ENCODE measurements at regions of chr4 and their contacts with region 1.

Region 1: DNA sequence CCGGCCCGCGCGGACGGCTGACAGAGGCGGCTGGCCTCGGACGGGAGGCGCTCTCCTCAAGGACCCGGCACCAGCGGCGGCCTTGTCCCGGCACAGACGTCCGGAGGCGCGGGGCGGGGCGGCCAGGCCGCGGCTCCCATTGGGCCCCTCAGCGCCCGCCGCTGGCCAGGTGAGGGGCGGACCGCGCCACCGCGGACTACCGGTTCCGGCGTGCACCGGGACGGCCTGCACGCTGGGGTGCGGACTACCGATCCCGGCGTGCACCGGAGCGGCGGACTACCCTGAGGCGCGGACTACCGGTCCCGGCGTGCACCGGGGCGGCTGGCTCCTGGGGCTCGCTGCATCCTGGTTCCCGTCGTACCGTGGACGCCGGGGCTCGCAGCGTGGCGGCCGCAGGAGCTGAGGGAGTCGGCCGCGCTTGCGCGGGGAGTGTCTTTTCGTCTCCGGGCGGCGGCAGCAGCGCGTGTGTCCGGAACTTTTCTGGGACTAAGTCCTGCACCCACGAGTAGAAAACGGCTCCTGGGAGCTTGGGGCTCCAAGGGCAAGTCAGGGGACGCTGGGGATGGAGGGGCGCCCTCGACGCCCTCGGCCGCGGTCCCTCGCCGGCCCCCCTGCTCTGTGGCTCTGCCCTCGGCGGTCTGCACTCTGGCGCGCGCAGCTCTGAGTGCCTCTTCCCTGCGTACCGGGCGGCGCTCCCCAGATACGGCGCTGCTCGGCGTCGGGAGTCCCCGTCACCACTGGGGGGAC is at the start of gene LETM1:
- DNase-seq: peak; percentile 95
- H3K4me3 Mint-ChIP-seq: peak within 1 kb of the TSS; percentile 87
- H3K27ac Mint-ChIP-seq: peak within 1 kb of the TSS; percentile 68
- H3K4me1 Mint-ChIP-seq: peaks cover 34% of the 10 kb centered on the region
- H3K27me3 Mint-ChIP-seq: no peaks in the 10 kb centered on the region
- total RNA-seq, gene LETM1: 93.9 and 101 TPM in 2 replicates

Region 2: DNA sequence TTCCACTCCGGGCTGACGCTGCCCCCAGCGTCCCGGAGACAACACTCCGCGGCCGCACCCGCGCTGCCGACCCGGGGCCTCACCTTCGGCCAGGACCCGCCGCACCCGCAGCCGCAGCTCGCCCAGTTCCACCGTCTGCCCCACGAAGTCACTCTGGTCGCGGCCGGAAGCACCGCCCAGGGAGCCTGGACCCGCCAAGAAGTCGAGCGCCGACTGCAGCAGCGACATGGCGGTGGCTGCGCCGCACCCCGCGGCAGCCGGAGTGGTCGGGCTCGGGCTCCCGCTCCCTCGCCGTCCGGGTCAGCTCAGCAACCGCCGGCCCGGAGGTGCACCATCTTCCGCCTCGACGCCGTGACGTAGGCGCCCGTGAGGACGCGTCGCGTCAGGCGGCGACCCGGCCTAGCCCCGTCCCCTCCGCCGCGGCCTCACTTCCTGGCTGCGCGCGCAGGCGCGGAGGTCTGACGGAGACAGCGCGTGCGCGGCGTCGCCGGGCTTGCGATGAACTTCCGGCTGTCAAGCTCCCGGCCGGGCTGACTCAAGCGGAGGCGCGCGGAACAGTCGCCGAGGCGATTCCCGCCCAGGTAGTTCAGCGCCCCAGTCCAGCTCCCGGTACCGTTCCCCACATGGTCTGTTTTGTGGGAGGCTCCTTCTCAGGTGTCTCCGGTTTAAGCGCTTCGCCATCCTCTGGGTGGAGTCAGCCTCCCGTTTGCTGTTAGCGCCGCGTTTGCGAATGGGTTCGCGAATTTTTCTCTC is 924.1 kb before region 1 on chr4 and contains the starts of genes GAK and TMEM175:
- intact Hi-C with region 1: loop called (anchors 5 kb)
- DNase-seq: peak; percentile 99
- H3K4me3 Mint-ChIP-seq: peak within 1 kb of the TSS; percentile 97
- H3K27ac Mint-ChIP-seq: peak within 1 kb of the TSS; percentile 90
- H3K4me1 Mint-ChIP-seq: peaks cover 34% of the 10 kb centered on the region
- H3K27me3 Mint-ChIP-seq: no peaks in the 10 kb centered on the region
- total RNA-seq, gene GAK: 146 and 149 TPM in 2 replicates
- total RNA-seq, gene TMEM175: 15.4 and 16.2 TPM in 2 replicates

Region 3: DNA sequence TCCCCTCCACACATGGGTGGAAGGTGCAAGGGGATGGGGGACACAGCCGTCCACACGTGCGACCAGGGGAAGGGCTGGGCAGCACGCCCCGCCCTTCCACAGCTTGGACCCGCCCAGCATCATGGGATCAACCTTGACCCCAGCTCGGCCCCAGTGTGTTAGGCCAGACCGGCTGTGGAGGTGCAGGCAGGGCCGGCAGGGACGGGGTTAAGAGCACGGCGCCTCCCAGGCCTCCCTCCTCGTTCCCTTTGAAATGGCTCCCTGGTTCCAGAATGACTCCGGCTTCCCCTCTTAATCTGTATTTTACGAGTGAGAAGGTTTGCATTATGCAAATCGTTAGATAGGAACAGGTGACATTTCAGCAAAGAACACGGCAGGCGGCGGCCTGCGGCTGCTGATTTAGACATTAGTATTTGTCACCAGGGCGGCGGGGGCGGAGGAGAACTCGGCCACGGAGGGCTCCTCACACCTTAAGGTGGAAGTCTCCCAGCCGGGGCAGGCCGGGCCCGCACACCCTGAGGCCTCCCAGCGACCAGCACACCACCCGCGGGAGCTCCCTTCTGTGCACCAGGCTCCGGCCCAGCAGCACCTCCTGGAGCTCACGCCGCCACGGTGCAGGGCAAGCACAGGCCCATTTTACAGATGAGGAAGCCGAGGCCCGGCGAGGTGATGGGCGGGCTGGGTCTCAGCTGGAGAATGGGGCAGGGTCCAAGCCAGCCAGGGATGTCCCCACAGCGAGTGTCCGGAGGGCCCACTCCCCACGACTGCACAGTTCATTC is 288.2 kb before region 1 on chr4:
- intact Hi-C with region 1: no loop called
- DNase-seq: no peak
- H3K4me3 Mint-ChIP-seq: no peak overlapping the region
- H3K27ac Mint-ChIP-seq: no peak overlapping the region
- H3K4me1 Mint-ChIP-seq: no peaks in the 10 kb centered on the region
- H3K27me3 Mint-ChIP-seq: no peaks in the 10 kb centered on the region

Region 4: GRCh38 chr4:1712216-1713002 is 143.8 kb before region 1 on chr4 and contains the start of gene SLBP:
- intact Hi-C with region 1: loop called (anchors 1 kb)
- DNase-seq: peak; percentile 99
- H3K4me3 Mint-ChIP-seq: peak within 1 kb of the TSS; percentile 99
- H3K27ac Mint-ChIP-seq: peak within 1 kb of the TSS; percentile 89
- H3K4me1 Mint-ChIP-seq: peaks cover 59% of the 10 kb centered on the region
- H3K27me3 Mint-ChIP-seq: no peaks in the 10 kb centered on the region
- total RNA-seq, gene SLBP: 136 and 140 TPM in 2 replicates

Region 5: DNA sequence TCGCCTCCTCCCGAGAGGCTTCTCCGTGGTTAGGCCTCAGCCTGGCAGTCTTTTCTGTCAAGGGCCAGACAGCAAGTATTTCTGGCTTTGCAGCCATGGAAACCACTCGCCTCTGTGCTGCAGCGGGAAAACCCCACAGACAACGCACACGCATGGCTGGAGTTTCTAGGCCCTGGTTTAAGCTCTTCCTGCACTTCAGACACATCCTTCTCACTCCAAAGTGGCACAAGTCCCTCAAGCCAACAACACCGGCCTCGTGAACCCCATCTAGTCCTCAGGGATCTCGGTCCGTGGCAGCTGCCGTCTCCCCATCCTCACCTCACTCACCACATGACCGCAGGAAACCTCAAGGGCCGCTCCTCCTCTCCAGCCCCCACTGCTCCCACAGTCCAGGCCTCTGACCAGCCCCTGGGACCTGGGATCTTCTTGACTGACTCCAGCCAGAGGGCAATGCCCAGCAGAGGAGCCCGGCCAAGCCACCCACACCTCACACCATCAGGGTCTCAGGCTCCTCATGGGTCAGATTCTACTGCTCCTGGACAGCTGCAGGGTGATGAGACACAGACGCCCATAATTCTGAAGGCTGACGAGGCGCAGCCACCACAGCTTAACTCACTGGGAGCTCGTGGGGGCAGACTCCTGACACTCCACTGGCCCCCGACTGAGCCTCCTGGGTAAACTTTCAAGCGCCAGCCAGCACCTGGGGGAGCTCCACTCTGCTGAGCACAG is 22.0 kb before region 1 on chr4:
- intact Hi-C with region 1: loop called (anchors 2 kb)
- DNase-seq: no peak
- H3K4me3 Mint-ChIP-seq: no peak overlapping the region
- H3K27ac Mint-ChIP-seq: peak overlapping the region; percentile 75
- H3K4me1 Mint-ChIP-seq: peaks cover 15% of the 10 kb centered on the region
- H3K27me3 Mint-ChIP-seq: no peaks in the 10 kb centered on the region

Region 6: DNA sequence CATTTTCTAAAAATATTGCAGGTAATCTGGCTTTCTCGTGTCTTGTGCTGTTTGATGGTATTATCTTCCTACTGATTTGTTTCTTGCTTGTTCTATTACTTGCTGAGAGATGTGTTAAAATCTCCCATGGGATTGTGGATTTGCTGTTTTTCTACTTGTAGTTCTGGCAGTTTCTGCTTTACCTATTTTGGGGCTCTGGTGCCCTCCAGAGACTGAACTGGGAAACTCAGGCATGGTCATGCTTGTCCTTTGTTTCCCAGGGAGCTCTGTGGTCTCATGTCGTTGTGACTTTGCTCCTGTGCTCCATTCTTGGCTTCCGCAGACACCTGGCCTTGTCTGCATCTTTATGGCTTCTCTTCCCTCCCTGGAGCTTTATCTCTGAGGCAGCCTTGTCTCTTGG is 54.4 kb after region 1 on chr4:
- intact Hi-C with region 1: loop called (anchors 2 kb)
- DNase-seq: no peak
- H3K4me3 Mint-ChIP-seq: no peak overlapping the region
- H3K27ac Mint-ChIP-seq: peak overlapping the region; percentile 84
- H3K4me1 Mint-ChIP-seq: peaks cover 47% of the 10 kb centered on the region
- H3K27me3 Mint-ChIP-seq: no peaks in the 10 kb centered on the region

Region 7: DNA sequence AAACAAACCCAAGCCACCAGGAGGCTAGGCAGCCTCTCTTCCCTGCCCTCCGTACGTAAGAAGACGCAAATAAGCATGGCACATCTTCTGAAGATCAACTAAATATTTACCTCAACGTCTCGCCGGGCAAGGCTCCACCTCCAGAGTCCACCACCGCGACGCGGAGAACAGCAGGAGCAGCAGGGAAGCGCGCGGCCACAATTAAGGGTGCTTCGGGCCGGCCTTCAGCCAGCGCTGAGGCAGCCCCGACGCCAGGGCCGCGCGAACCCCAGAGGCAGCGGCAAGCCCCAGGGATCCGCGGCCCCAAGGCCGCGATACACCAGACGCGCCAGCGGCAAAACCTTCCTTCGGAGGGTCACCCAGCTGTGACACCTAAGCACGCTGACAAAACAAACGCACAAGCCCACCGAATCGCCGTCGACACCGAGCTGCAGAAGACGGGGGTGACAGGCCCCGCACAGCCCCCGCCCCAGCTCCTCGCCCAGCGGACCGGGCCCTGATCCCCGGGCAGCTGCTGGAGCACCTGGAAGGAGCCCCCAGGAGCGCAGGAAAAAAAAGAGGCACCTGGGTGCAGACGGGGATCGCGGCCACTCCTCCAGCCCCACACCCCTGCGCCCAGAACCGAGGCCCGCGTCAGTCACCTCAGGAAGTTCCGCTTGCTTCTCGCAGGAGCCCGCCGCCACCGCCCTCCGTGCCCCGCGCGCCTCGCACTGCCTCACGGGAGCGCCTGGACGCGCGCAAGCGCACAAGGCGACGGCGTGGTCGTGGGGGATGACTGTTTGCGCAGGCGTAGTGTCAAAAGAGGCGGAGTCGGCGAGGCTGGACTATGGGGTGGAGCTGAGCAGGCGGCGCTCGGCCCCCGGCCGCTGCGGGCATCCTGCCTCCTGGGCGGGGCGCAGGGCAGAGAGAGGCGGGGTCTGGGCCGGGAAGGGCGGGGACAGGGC is 385.5 kb after region 1 on chr4 and contains the starts of genes HAUS3 and POLN:
- intact Hi-C with region 1: loop called (anchors 1 kb)
- DNase-seq: peak; percentile 100
- H3K4me3 Mint-ChIP-seq: peak within 1 kb of the TSS; percentile 85
- H3K27ac Mint-ChIP-seq: peak within 1 kb of the TSS; percentile 90
- H3K4me1 Mint-ChIP-seq: peaks cover 53% of the 10 kb centered on the region
- H3K27me3 Mint-ChIP-seq: peaks cover 2% of the 10 kb centered on the region
- total RNA-seq, gene HAUS3: 19.2 and 19.9 TPM in 2 replicates
- total RNA-seq, gene POLN: 2.1 and 3.5 TPM in 2 replicates